ENCODE measurements at regions of chr12 and their contacts with region 1.

Region 1: GRCh38 chr12:2129076-2129475 is 76.3 kb downstream of the CACNA1C start:
- DNase-seq: peak; percentile 95
- H3K4me3 ChIP-seq: no peak overlapping the region
- H3K27ac ChIP-seq: no peak overlapping the region
- H3K4me1 ChIP-seq: peaks cover 13% of the 10 kb centered on the region
- H3K27me3 ChIP-seq: no peaks in the 10 kb centered on the region
- CTCF ChIP-seq: no peak

Region 2: DNA sequence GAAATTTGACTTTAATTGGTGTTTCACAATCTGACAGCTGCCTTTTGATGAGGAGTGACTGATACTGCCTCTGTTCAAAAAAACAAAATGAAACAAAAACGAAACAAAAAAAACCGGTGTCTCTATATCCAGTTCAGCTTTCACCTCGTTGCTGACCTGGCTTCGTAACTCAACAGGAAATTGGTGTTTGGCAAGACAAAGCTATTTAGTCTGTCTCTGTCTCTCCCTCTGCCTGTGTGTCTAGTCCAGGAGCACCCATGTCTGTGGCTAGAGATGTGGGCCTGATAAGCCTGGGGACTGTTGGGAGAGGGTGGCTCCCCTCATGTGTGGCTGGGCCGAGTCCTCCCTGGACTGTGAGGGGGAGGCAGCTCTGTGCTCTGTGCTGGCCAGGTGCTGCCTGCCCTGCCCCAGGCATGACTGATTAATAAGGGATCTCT is 65.0 kb before region 1 on chr12:
- CTCF ChIA-PET with region 1: no interaction called
- dilution Hi-C with region 1: no loop called
- in situ Hi-C with region 1: no loop called
- intact Hi-C with region 1: loop called (anchors 5 kb)
- DNase-seq: peak; percentile 69
- H3K4me3 ChIP-seq: peak overlapping the region in 1 of 3 experiments; percentile 24
- H3K27ac ChIP-seq: peak overlapping the region; percentile 5
- H3K4me1 ChIP-seq: peaks cover 9% of the 10 kb centered on the region
- H3K27me3 ChIP-seq: no peaks in the 10 kb centered on the region
- CTCF ChIP-seq: no peak

Region 3: DNA sequence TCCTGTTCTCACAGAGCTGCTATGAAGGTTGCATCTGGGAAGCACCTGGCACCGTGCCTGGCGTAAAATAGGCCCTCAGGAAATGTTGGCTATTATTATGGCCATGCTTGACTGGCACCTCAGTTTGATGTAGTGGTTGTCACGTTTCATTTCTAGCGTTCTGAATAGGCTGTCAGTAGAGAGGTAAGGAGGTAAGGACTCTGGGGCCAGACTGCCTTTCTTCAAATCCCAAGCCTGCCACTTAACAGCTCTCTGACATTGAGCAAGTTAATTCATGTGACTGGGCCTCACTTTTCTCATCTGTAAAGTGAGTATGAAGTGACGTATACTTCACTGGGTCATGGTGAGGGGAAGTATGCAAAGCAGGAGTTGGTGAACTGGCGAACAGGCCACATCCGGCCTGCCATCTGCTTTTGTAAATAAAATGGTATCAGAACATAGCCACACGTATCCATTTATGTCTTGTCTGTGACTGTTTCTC is 119.9 kb after region 1 on chr12:
- CTCF ChIA-PET with region 1: no interaction called
- dilution Hi-C with region 1: no loop called
- in situ Hi-C with region 1: no loop called
- intact Hi-C with region 1: no loop called
- DNase-seq: no peak
- H3K4me3 ChIP-seq: no peak overlapping the region
- H3K27ac ChIP-seq: no peak overlapping the region
- H3K4me1 ChIP-seq: peaks cover 3% of the 10 kb centered on the region
- H3K27me3 ChIP-seq: no peaks in the 10 kb centered on the region
- CTCF ChIP-seq: no peak

Region 4: DNA sequence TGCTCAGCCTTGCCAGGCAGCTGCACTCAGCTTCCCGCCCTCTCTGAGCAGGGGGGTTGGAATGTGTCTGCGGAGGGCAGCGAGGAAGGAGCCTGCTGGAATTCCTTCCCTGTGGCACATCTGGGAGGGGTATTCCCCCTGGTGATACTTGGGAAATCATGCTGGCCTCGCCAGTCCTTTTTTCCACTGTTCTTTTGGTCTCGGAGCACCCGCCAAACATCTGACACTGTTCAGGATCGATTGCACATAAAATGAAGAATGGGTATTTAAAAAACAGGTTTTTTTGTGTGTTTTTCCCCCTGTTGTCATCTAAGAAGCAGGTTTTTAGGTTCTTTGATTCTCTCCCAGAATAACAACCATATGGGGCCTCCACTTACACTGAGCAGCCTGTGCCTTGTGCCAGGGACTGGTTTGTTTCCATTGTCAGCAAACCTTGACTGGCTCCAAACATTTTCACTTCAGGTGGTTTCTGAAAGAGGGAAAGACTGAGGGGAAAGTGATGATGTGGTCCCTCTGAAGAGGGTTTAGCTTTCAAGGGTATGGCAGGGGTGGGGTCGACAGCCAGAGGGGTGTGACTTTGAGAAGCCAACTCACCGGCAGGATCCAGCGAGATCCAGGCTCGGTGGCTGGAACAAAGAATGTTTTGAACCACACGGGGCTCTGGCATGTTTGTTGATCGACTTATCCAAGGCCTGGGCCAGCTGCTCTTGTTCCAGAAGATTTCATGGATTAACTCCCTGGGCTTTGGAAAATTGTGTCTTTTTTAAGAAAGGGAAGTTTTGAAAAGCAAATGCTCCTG is 138.8 kb after region 1 on chr12:
- CTCF ChIA-PET with region 1: no interaction called
- dilution Hi-C with region 1: no loop called
- in situ Hi-C with region 1: no loop called
- intact Hi-C with region 1: loop called (anchors 5 kb)
- DNase-seq: peak; percentile 19
- H3K4me3 ChIP-seq: no peak overlapping the region
- H3K27ac ChIP-seq: peak overlapping the region; percentile 24
- H3K4me1 ChIP-seq: peaks cover 30% of the 10 kb centered on the region
- H3K27me3 ChIP-seq: no peaks in the 10 kb centered on the region
- CTCF ChIP-seq: no peak

Region 5: DNA sequence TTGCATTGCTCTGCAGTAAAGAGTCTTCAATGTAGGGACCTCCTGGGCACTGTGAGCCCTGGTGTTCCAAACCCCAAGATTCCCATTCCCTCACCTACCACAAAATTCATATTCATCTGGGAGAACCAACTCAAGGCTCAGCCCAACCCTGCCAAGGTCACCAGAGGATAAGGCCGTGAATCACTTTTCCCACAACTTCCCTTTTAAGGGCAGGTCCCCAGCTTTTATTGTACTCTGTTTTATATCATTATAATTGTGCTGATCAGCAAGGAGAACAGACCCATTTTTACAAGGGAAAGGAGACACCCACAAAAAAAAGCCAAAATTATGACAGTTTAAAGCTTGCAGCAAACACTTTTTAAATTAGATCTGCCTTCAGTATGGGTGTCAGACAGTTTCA is 302.7 kb after region 1 on chr12:
- CTCF ChIA-PET with region 1: no interaction called
- dilution Hi-C with region 1: loop called (anchors 5 kb)
- in situ Hi-C with region 1: no loop called
- intact Hi-C with region 1: no loop called
- DNase-seq: no peak
- H3K4me3 ChIP-seq: no peak overlapping the region
- H3K27ac ChIP-seq: no peak overlapping the region
- H3K4me1 ChIP-seq: no peaks in the 10 kb centered on the region
- H3K27me3 ChIP-seq: no peaks in the 10 kb centered on the region
- CTCF ChIP-seq: no peak